Motor neuron (in vitro differentiated cells): ENCODE measurements at regions of chr1 and their contacts with region 1.

Region 1: DNA sequence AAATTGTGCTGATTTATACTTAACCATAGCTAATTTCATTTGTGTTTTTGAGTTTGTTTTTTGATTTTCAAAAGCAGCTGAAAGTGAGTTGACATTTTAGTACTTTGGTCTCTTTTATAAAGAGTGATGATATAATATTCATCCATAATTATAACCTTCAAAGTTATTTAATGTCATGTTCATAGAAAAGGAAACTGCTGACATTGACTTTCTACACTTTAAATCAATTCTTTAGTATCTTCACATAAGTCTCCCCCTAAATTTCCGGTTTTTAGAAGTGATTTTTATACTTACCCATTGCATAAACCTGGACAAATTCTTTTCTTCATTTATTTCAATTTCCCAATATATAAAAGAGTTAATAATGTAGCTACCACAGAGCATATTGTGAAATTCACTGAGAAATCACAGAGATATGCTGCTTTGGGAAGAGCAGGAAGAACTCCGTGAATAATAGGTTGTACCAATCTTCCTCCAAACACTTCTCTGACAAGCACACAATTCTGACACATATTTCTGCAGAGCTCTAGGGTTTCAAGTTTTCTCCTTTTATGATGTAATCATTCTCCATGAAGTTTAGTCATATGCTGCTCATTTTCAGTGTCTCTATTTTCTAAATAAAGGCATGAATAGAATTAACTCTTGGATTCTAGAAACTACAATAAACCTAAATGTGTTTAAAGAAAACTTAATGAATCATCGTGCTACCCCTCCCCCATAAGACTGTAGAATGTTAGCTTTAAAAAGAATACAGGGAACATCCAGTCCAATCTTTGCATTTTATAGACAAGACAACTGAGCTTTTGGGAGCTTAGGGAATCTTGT is 25.6 kb upstream of the CDC42BPA start:
- ATAC-seq: peak in 7 of 8 experiments; percentile 50 to 93 (median 63)
- H3K4me3 ChIP-seq: no peak overlapping the region
- H3K27ac ChIP-seq: no peak overlapping the region
- H3K4me1 ChIP-seq: no peaks in the 10 kb centered on the region

Region 2: GRCh38 chr1:227174164-227174563 is 169.8 kb before region 1 on chr1:
- in situ Hi-C with region 1: no loop called
- ATAC-seq: no peak
- H3K4me3 ChIP-seq: no peak overlapping the region
- H3K27ac ChIP-seq: no peak overlapping the region
- H3K4me1 ChIP-seq: no peaks in the 10 kb centered on the region

Region 3: DNA sequence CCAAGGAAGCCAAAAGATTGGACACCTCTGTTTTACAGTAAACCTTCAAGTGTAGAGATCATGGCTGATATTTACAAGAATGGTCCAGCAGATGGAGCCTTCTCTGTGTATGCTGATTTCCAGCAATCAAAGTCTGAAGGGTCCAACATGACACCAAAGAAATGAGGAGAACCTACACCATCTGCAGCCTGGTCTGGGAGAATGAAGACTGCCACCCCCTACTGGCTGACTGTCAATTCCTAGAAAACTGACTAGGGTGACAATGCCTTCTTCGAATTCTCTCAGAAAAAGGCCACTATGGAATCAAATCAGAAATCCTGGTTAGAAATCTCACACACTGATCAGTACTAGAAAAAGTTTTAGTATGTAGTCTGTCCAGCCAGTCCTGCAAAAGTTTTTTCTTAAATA is 108.9 kb before region 1 on chr1:
- in situ Hi-C with region 1: loop called in 1 of 9 experiments (anchors 25 kb)
- ATAC-seq: peak in 3 of 8 experiments; percentile 76 to 95 (median 79)
- H3K4me3 ChIP-seq: no peak overlapping the region
- H3K27ac ChIP-seq: no peak overlapping the region
- H3K4me1 ChIP-seq: no peaks in the 10 kb centered on the region

Region 4: DNA sequence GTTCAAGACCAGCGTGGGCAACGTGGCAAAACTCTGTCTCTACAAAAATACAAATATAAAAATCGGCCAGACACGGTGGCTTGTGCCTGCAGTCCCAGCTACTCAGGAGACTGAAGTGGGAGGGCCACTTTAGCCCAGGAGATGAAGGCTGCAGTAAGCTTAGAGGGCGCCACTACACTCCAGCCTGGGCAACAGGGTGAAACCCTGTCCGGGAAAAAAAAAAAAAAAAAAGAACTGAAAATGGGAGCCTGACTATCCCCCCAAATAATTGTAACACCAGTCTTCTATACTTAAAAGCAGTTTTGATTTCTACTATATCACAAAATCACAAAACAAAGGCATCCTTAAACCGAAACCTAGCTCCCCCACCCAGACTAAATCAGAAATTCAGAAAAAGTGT is 86.0 kb before region 1 on chr1:
- in situ Hi-C with region 1: no loop called
- ATAC-seq: no peak
- H3K4me3 ChIP-seq: no peak overlapping the region
- H3K27ac ChIP-seq: no peak overlapping the region
- H3K4me1 ChIP-seq: no peaks in the 10 kb centered on the region

Region 5: DNA sequence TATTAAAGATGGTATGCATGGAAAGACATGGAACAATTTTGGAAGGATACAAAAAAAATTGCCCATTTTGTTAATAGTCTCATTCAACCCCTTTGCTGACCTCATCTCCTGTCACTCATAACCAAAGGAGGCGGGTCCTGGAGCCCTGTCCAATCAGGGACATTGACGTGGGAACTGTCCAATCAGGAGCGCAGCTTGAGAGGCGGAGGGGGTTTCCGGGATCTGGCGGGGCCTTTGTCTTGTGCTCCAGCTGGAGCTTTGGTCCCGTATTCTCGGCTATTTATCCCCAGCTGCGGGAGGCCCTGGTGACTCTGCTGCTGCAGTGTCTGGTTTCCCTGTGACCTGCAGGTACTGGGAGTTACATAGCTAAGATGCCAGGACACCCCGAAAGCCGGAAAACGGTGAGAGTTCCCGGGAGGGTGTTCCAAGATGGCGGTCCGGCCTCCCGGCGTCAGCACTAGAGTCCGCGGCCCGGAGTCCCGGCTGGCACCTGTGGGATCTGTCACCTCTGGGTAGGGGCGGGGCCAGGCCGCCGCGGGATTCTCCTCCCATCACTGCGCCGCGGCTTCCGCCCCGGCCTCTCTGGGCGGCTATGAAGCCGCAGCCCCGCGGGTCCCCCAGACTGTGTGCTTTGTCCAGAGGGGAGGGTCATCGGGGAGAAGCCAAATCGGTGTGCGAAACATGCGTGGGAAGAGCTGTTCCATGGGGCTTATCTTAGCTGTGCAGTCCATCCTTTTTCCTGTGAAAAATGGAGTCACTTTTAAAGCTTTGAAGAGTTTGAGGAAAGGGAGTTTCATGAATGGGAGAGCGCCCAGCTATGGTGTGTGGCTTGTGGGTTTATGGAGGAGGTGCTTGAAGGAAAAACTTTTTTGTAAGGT is 219.6 kb after region 1 on chr1 and contains the start of gene ZNF678:
- in situ Hi-C with region 1: no loop called
- ATAC-seq: peak; percentile 96 to 98 (median 97)
- H3K4me3 ChIP-seq: peak within 1 kb of the TSS; percentile 66 to 95 (median 79)
- H3K27ac ChIP-seq: peak within 1 kb of the TSS; percentile 99
- H3K4me1 ChIP-seq: peaks cover 10 to 18% of the 10 kb centered on the region in 2 donors
- total RNA-seq, gene ZNF678: 1.7 to 27.0 (median 18.3) TPM